Calu3 (cell line): ENCODE measurements at regions of chr7 and their contacts with region 1.

Region 1: GRCh38 chr7:81150951-81151361 is 232.1 kb upstream of the SEMA3C start:
- DNase-seq: no peak
- H3K4me3 Mint-ChIP-seq: no peak overlapping the region
- H3K27ac Mint-ChIP-seq: no peak overlapping the region
- H3K4me1 Mint-ChIP-seq: peaks cover 24% of the 10 kb centered on the region
- H3K27me3 Mint-ChIP-seq: no peaks in the 10 kb centered on the region
- CTCF ChIP-seq: no peak

Region 2: DNA sequence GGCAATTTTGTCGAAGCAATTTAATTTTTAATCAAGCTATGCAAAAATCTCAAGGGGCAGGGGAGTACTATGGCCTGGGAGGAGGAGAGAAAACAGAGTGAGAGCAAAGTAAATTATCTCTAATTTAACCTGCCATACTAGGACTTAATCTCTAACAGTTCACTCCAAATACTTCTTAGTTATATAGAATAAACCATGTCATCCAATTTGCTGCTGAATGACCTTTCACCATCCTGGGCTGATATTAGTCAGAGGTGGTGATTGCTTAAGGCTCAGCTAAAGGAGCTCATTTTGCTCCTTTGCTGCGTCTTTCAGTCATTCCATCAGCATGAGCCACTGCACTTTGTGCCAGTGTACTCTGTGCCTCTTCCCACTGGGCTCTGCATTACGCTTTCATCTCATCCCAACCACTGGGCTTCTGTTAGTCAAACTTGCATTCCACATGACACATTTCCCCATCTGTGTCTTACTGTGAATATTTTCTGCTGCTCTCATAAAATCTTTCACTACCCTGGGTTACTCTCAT is 428.3 kb before region 1 on chr7:
- CTCF ChIA-PET with region 1: no interaction called
- intact Hi-C with region 1: loop called (anchors 10 kb)
- DNase-seq: peak; percentile 60
- H3K4me3 Mint-ChIP-seq: peak overlapping the region; percentile 12
- H3K27ac Mint-ChIP-seq: peak overlapping the region; percentile 66
- H3K4me1 Mint-ChIP-seq: peaks cover 47% of the 10 kb centered on the region
- H3K27me3 Mint-ChIP-seq: no peaks in the 10 kb centered on the region
- CTCF ChIP-seq: no peak

Region 3: GRCh38 chr7:80869821-80870751 is 280.9 kb before region 1 on chr7:
- CTCF ChIA-PET with region 1: no interaction called
- intact Hi-C with region 1: no loop called
- DNase-seq: peak; percentile 7
- H3K4me3 Mint-ChIP-seq: peak overlapping the region; percentile 44
- H3K27ac Mint-ChIP-seq: peak overlapping the region; percentile 92
- H3K4me1 Mint-ChIP-seq: peaks cover 21% of the 10 kb centered on the region
- H3K27me3 Mint-ChIP-seq: no peaks in the 10 kb centered on the region
- CTCF ChIP-seq: no peak

Region 4: GRCh38 chr7:80918909-80919662 is 231.9 kb before region 1 on chr7 and contains the start of gene SEMA3C:
- CTCF ChIA-PET with region 1: interaction called, 4 read pairs
- intact Hi-C with region 1: loop called (anchors 2 kb)
- DNase-seq: peak; percentile 92
- H3K4me3 Mint-ChIP-seq: peak within 1 kb of the TSS; percentile 86
- H3K27ac Mint-ChIP-seq: peak within 1 kb of the TSS; percentile 100
- H3K4me1 Mint-ChIP-seq: peaks cover 45% of the 10 kb centered on the region
- H3K27me3 Mint-ChIP-seq: no peaks in the 10 kb centered on the region
- CTCF ChIP-seq: no peak
- total RNA-seq, gene SEMA3C: 61.1 and 67.7 TPM in 2 replicates

Region 5: GRCh38 chr7:80941208-80941758 is 209.7 kb before region 1 on chr7:
- CTCF ChIA-PET with region 1: interaction called, 4 read pairs
- intact Hi-C with region 1: loop called (anchors 2 kb)
- DNase-seq: no peak
- H3K4me3 Mint-ChIP-seq: peak overlapping the region; percentile 25
- H3K27ac Mint-ChIP-seq: peak overlapping the region; percentile 89
- H3K4me1 Mint-ChIP-seq: peaks cover 29% of the 10 kb centered on the region
- H3K27me3 Mint-ChIP-seq: no peaks in the 10 kb centered on the region
- CTCF ChIP-seq: no peak

Region 6: GRCh38 chr7:81244224-81244623 is 93.3 kb after region 1 on chr7:
- CTCF ChIA-PET with region 1: interaction called, 12 read pairs
- intact Hi-C with region 1: no loop called
- DNase-seq: no peak
- H3K4me3 Mint-ChIP-seq: no peak overlapping the region
- H3K27ac Mint-ChIP-seq: no peak overlapping the region
- H3K4me1 Mint-ChIP-seq: no peaks in the 10 kb centered on the region
- H3K27me3 Mint-ChIP-seq: no peaks in the 10 kb centered on the region
- CTCF ChIP-seq: no peak

Region 7: DNA sequence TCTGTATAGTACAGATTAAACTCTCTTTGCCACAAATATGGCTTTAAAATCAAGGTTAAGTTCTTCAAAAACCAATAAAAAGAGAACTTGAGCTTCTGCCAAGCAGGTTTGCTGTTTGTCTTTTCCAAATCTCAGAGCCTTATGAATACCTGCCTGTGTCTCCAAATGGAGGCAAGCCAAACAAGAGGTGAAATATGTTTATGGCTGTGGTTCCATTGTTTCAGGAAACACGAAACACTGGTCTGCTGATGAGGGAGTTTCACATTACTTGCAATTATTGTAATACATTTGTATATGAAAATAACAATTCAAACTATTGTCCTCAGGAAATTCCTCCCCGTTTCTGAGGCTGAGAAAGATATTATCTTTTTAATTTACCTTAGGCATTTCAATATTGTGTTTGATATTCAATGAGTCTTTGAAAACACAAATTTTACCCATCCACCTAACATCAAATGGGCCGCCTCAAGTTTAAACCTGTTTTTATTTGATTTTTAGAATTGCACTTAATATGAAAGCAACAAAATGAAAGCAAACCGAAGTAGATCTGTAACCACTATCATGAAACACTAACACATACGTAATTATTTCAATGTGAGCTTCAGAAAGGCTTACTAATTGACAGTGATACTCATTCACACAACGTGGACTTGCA is 259.6 kb after region 1 on chr7:
- CTCF ChIA-PET with region 1: no interaction called
- intact Hi-C with region 1: loop called (anchors 10 kb)
- DNase-seq: peak; percentile 5
- H3K4me3 Mint-ChIP-seq: no peak overlapping the region
- H3K27ac Mint-ChIP-seq: no peak overlapping the region
- H3K4me1 Mint-ChIP-seq: peaks cover 35% of the 10 kb centered on the region
- H3K27me3 Mint-ChIP-seq: no peaks in the 10 kb centered on the region
- CTCF ChIP-seq: no peak

Region 8: DNA sequence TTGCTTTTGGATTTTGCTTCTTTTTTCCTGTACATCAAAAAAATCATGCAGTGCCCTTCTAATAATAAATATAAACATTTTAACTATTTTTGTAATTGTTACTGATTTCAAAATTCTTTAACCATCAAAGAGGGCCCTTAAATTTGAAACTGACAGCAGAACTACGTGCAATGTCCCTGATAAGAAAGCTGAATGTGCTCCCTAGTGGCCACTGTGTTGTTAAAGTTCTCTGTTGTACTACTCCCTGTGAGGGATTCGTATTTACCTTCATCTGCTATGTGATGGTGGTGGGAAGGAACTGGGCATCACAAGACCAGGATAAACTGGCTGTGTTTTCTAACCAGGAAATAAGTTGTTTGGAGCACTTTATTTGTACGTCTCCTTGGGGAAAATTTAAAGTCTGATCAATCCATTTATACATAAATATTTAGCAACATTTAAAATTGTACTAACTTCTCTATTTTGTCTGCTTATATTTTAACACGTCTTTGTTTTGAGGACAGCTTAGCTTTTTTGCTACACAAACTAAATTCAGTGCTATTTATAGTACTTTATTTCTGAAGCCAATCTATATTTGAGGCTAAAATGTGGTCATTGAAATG is 296.5 kb after region 1 on chr7:
- CTCF ChIA-PET with region 1: no interaction called
- intact Hi-C with region 1: loop called (anchors 10 kb)
- DNase-seq: peak; percentile 21
- H3K4me3 Mint-ChIP-seq: no peak overlapping the region
- H3K27ac Mint-ChIP-seq: no peak overlapping the region
- H3K4me1 Mint-ChIP-seq: no peaks in the 10 kb centered on the region
- H3K27me3 Mint-ChIP-seq: no peaks in the 10 kb centered on the region
- CTCF ChIP-seq: no peak